Activated T-helper 1 cell treated with anti-CD3 and anti-CD28 coated beads, Interleukin-12 subunit alpha, Interleukin-12 subunit beta, Interleukin-2, Interleukin-4 antibody, amounts not matched to agents 30 ng/mL and 10 ng/mL and 1 ng/mL, durations not matched to agents 14 hours and 24 hours and 36 hours (primary cell): ENCODE measurements at regions of chr6 and their contacts with region 1.

Region 1: GRCh38 chr6:148760568-148761526 is 14.0 kb downstream of the UST start:
- DNase-seq: no peak
- H3K4me3 Mint-ChIP-seq: peak overlapping the region; percentile 11
- H3K27ac Mint-ChIP-seq: peak overlapping the region; percentile 54
- H3K4me1 Mint-ChIP-seq: peaks cover 30% of the 10 kb centered on the region
- H3K27me3 Mint-ChIP-seq: peaks cover 57% of the 10 kb centered on the region

Region 2: DNA sequence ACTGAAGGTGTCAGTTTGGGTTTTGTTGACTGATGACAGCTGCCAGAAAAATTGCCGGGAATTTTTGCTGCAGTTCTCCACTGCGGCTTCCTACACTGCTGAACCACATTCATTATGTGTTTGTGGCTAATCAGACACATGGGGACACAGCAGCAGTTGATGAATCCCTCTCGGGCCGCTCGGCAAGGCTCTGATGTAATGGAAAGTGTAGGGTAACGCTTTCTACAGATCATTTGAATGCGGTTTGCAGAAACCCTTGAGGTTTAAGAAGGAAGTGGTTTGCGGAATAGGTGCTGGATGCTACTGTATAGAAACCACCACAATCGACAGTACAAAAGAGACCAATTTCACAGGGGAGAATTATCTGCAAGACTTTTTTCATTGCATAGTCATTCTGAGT is 556.9 kb before region 1 on chr6:
- intact Hi-C with region 1: loop called (anchors 10 kb)
- DNase-seq: peak; percentile 65
- H3K4me3 Mint-ChIP-seq: peak overlapping the region; percentile 12
- H3K27ac Mint-ChIP-seq: peak overlapping the region; percentile 91
- H3K4me1 Mint-ChIP-seq: peaks cover 27% of the 10 kb centered on the region
- H3K27me3 Mint-ChIP-seq: peaks cover 70% of the 10 kb centered on the region

Region 3: GRCh38 chr6:148746363-148747144 is 14.3 kb before region 1 on chr6 and contains the start of gene UST:
- intact Hi-C with region 1: loop called (anchors 1 kb)
- DNase-seq: no peak
- H3K4me3 Mint-ChIP-seq: peak within 1 kb of the TSS; percentile 91
- H3K27ac Mint-ChIP-seq: peak within 1 kb of the TSS; percentile 31
- H3K4me1 Mint-ChIP-seq: peaks cover 23% of the 10 kb centered on the region
- H3K27me3 Mint-ChIP-seq: peaks cover 75% of the 10 kb centered on the region
- total RNA-seq, gene UST: 0.29 and 0.49 TPM in 2 replicates

Region 4: GRCh38 chr6:148780918-148781436 is 20.1 kb after region 1 on chr6:
- intact Hi-C with region 1: loop called (anchors 2 kb)
- DNase-seq: no peak
- H3K4me3 Mint-ChIP-seq: no peak overlapping the region
- H3K27ac Mint-ChIP-seq: no peak overlapping the region
- H3K4me1 Mint-ChIP-seq: peaks cover 7% of the 10 kb centered on the region
- H3K27me3 Mint-ChIP-seq: peaks cover 13% of the 10 kb centered on the region

Region 5: DNA sequence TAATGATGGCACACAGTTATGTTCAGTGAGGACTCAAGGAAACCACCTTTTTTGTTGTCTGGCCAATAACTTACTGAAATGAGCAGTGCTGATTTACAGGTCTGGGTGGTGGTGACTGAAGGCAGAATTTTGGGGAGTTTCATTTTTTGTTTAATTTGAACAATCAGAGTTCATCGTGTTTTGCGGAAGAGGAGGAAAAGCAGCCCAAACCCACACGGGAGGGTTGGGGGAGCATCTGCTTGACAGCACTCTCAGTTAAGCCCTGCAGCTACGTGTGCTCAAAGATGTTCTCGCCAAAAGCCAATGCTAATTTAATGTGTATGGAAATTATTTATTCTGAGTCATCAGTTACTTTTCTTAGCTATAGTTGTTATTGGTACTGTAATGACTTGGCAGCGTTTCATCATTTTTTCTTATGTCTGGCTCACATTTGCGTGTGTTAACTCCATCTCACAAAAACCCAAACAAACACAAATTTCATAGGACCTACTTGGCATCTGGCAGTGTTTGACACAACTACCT is 75.1 kb after region 1 on chr6:
- intact Hi-C with region 1: loop called (anchors 5 kb)
- DNase-seq: no peak
- H3K4me3 Mint-ChIP-seq: no peak overlapping the region
- H3K27ac Mint-ChIP-seq: no peak overlapping the region
- H3K4me1 Mint-ChIP-seq: peaks cover 12% of the 10 kb centered on the region
- H3K27me3 Mint-ChIP-seq: peaks cover 18% of the 10 kb centered on the region

Region 6: GRCh38 chr6:149499066-149499465 is 738.2 kb after region 1 on chr6:
- intact Hi-C with region 1: loop called (anchors 1 kb)
- DNase-seq: no peak
- H3K4me3 Mint-ChIP-seq: no peak overlapping the region
- H3K27ac Mint-ChIP-seq: peak overlapping the region; percentile 83
- H3K4me1 Mint-ChIP-seq: peaks cover 78% of the 10 kb centered on the region
- H3K27me3 Mint-ChIP-seq: no peaks in the 10 kb centered on the region